HepG2 (cell line): ENCODE measurements at regions of chr14 and their contacts with region 1.

Region 1: DNA sequence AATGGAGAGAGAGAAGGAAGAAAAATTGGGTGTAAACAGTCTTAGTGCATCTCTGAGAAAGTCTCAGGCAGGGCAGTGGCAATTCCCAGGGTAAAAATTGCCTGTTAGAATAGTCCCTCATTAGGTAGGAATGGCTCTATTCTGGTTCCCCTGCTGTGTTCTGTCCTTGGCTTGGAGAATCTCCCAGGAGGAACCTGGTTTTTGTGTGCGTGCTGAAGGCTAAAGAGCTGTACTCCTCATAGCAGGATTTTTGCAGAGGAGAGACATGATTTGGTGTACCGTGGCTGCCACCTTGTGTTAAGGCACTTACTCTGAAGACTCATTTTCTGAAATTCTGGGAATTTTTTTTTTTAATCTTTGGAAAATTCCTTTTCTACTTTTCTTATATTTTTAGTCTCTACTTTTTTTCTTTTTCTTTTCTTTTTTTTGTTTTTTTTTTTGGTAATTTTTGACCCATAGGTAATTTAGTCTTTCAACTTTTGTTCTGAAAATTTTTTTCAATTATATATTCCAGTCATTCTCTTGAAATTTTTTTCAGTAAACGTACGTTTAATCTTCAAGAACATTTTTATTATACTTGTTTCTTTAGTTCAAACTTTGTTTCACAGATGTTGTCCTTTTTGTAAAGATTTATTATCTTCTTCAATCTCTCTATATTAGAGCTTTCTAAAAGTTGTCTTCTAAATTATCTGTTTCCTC is 63.8 kb downstream of the FBXO33 start:
- DNase-seq: peak; percentile 88
- ATAC-seq: peak; percentile 77
- H3K4me3 ChIP-seq: no peak overlapping the region
- H3K27ac ChIP-seq: no peak overlapping the region
- H3K4me1 ChIP-seq: peaks cover 5% of the 10 kb centered on the region; the same call in 1 of the 2 replicates
- H3K27me3 ChIP-seq: no peaks in the 10 kb centered on the region
- CTCF ChIP-seq: peak; percentile 82
- EP300 ChIP-seq: no peak
- POLR2A ChIP-seq: no peak
- RAD21 ChIP-seq: peak; percentile 86

Region 2: GRCh38 chr14:39469094-39469710 is 100.8 kb after region 1 on chr14:
- CTCF ChIA-PET with region 1: no interaction called
- POLR2A ChIA-PET with region 1: no interaction called
- in situ Hi-C with region 1: no loop called
- intact Hi-C with region 1: loop called (anchors 5 kb)
- DNase-seq: peak; percentile 74
- ATAC-seq: peak; percentile 93
- H3K4me3 ChIP-seq: peak overlapping the region in 1 of 3 experiments; percentile 14; a peak in 1 of 6 replicates
- H3K27ac ChIP-seq: no peak overlapping the region
- H3K4me1 ChIP-seq: peaks cover 10% of the 10 kb centered on the region
- H3K27me3 ChIP-seq: no peaks in the 10 kb centered on the region
- CTCF ChIP-seq: peak; percentile 94
- EP300 ChIP-seq: no peak
- POLR2A ChIP-seq: no peak
- RAD21 ChIP-seq: peak; percentile 78